ENCODE measurements at regions of chr12 and their contacts with region 1.

Region 1: DNA sequence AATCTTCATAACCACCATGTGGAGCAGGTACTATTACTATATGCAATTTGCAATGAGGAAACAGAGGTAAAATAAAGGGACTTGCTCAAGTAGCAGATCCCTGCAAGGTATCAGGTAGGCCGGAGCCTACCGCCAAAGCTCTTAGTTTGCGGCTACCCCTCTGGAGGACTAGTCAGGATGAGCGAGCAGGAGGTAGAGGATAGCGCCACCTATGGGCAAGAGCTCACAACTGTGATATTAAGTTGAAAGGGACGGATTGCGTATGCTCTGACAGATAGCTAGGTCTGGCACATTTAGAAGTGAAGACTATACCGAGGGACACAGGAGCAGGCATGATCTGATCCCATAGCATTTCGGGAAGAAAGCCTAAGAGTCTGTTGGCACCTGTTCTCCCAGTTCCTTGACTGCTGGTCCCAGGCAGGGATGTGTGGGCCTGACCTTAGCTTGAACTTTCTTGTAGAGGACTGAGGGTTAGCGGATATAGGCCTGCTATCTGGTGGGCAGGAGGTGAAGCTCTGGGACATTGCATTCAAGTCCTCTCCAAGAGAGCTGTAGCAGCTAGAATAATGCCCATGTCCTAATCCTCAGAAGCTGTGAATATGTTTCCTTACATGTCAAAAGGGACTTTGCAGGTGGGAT is 48.0 kb downstream of the SLC17A8 start:
- DNase-seq: peak; percentile 70 to 87
- H3K4me3 ChIP-seq: no peak overlapping the region
- H3K27ac ChIP-seq: no peak overlapping the region
- H3K4me1 ChIP-seq: peaks cover 0 to 2% (median 0%) of the 10 kb centered on the region in 4 experiments; a peak in 2 of 7 replicates
- H3K27me3 ChIP-seq: no peaks in the 10 kb centered on the region
- CTCF ChIP-seq: peak; percentile 71 to 98 (median 90)
- EP300 ChIP-seq: no peak
- POLR2A ChIP-seq: no peak
- RAD21 ChIP-seq: peak; percentile 84 to 90

Region 2: GRCh38 chr12:100356644-100357223 is 48.2 kb before region 1 on chr12 and contains the start of gene SLC17A8:
- CTCF ChIA-PET with region 1: interaction called, 92 read pairs
- POLR2A ChIA-PET with region 1: no interaction called
- DNase-seq: peak; percentile 13 to 63
- H3K4me3 ChIP-seq: peak within 1 kb of the TSS in 1 of 4 experiments; percentile 34; a peak in 4 of 8 replicates
- H3K27ac ChIP-seq: no peak within 1 kb of the TSS
- H3K4me1 ChIP-seq: peaks cover 2 to 7% (median 4%) of the 10 kb centered on the region in 4 experiments; a peak in 2 of 7 replicates
- H3K27me3 ChIP-seq: no peaks in the 10 kb centered on the region
- CTCF ChIP-seq: no peak
- EP300 ChIP-seq: no peak
- POLR2A ChIP-seq: no peak
- RAD21 ChIP-seq: no peak; a peak in 1 of 4 replicates
- total RNA-seq, gene SLC17A8: 0.11 and 0.30 TPM in 2 replicates

Region 3: GRCh38 chr12:100375038-100375735 is 29.7 kb before region 1 on chr12:
- CTCF ChIA-PET with region 1: interaction called, 49 read pairs
- POLR2A ChIA-PET with region 1: no interaction called
- DNase-seq: no peak
- H3K4me3 ChIP-seq: no peak overlapping the region
- H3K27ac ChIP-seq: no peak overlapping the region
- H3K4me1 ChIP-seq: peaks cover 3 to 17% (median 13%) of the 10 kb centered on the region in 4 experiments; a peak in 5 of 7 replicates
- H3K27me3 ChIP-seq: no peaks in the 10 kb centered on the region
- CTCF ChIP-seq: no peak
- EP300 ChIP-seq: no peak
- POLR2A ChIP-seq: no peak
- RAD21 ChIP-seq: no peak

Region 4: DNA sequence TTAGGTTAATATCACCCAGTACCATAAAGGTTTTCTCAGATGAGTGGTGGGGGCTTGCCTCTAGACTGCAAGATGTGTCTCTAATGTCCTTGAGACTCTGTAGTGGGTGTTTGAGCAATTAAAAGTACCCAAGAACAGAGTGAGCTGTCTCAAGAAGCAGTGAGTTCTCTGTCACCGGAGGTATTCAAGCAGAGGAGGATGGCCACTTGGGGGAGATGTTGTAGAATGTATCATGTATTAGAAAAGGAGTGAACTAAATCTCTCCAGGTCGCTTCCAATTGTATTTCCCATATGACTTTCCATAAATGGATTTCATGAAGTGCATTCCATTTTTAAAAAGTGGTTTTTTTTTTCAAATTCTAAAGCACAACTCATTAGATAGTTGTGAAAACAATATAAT is 13.0 kb before region 1 on chr12:
- CTCF ChIA-PET with region 1: interaction called, 47 read pairs
- POLR2A ChIA-PET with region 1: no interaction called
- DNase-seq: no peak
- H3K4me3 ChIP-seq: no peak overlapping the region
- H3K27ac ChIP-seq: no peak overlapping the region
- H3K4me1 ChIP-seq: no peaks in the 10 kb centered on the region
- H3K27me3 ChIP-seq: no peaks in the 10 kb centered on the region
- CTCF ChIP-seq: peak in 2 of 3 experiments; percentile 2 to 27; a peak in 3 of 4 replicates
- EP300 ChIP-seq: no peak
- POLR2A ChIP-seq: no peak
- RAD21 ChIP-seq: peak; percentile 9 to 13; a peak in 1 of 4 replicates

Region 5: GRCh38 chr12:100433701-100434100 is 28.8 kb after region 1 on chr12:
- CTCF ChIA-PET with region 1: interaction called, 14 read pairs
- POLR2A ChIA-PET with region 1: no interaction called
- DNase-seq: no peak
- H3K4me3 ChIP-seq: no peak overlapping the region
- H3K27ac ChIP-seq: no peak overlapping the region
- H3K4me1 ChIP-seq: no peaks in the 10 kb centered on the region
- H3K27me3 ChIP-seq: no peaks in the 10 kb centered on the region
- CTCF ChIP-seq: no peak
- EP300 ChIP-seq: no peak
- POLR2A ChIP-seq: no peak
- RAD21 ChIP-seq: no peak

Region 6: DNA sequence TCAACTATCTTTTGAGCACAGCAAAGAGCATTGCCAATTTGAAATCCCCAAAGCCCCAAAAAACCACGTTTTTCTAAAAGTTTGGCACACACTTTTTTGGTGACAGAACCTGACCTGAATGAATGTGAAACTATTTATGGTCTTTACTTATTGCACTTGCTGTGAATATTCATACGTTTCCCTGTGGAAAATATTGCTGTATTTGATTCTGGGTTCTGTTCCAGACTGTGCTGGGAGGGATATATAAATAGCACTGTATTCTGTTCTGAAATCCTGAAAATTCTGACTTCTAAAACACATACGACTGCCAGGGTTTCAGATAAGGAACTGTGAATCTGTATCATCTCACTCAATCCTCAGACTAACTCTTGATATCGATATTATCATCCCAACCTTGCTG is 103.9 kb after region 1 on chr12:
- CTCF ChIA-PET with region 1: interaction called, 12 read pairs
- POLR2A ChIA-PET with region 1: no interaction called
- DNase-seq: no peak
- H3K4me3 ChIP-seq: no peak overlapping the region
- H3K27ac ChIP-seq: no peak overlapping the region
- H3K4me1 ChIP-seq: no peaks in the 10 kb centered on the region
- H3K27me3 ChIP-seq: no peaks in the 10 kb centered on the region
- CTCF ChIP-seq: no peak
- EP300 ChIP-seq: no peak
- POLR2A ChIP-seq: no peak
- RAD21 ChIP-seq: no peak

Region 7: DNA sequence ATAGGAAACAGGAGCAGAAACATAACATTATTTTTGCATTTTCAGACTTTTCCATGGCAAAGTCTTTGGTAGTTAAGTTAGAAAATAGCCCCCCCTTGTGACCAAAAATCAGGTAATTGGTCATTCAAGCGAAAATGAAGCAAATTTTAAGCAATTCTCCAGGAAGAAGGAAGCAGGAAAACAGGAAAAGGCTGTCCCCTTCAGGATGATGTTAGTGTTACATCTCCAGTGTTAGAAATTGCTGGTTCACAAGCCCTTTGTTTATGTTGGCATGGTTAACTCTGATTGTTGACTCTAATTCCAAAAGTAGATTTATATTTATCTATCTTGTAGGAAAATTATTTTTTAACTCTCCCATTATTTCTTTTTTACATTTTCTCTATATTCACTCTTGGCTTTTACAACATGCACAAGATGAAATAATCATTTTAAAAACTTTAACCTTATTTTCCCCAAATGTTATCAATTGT is 149.8 kb after region 1 on chr12:
- CTCF ChIA-PET with region 1: interaction called, 27 read pairs
- POLR2A ChIA-PET with region 1: no interaction called
- DNase-seq: no peak
- H3K4me3 ChIP-seq: no peak overlapping the region
- H3K27ac ChIP-seq: no peak overlapping the region
- H3K4me1 ChIP-seq: no peaks in the 10 kb centered on the region
- H3K27me3 ChIP-seq: peaks cover 0 to 1% (median 0%) of the 10 kb centered on the region in 4 experiments; a peak in 1 of 7 replicates
- CTCF ChIP-seq: peak in 2 of 3 experiments; percentile 90 to 94; a peak in 3 of 4 replicates
- EP300 ChIP-seq: no peak
- POLR2A ChIP-seq: no peak
- RAD21 ChIP-seq: peak; percentile 97 to 99

Measured in H1 (cell line).